ENCODE measurements at regions of chr10 and their contacts with region 1.

Region 1: DNA sequence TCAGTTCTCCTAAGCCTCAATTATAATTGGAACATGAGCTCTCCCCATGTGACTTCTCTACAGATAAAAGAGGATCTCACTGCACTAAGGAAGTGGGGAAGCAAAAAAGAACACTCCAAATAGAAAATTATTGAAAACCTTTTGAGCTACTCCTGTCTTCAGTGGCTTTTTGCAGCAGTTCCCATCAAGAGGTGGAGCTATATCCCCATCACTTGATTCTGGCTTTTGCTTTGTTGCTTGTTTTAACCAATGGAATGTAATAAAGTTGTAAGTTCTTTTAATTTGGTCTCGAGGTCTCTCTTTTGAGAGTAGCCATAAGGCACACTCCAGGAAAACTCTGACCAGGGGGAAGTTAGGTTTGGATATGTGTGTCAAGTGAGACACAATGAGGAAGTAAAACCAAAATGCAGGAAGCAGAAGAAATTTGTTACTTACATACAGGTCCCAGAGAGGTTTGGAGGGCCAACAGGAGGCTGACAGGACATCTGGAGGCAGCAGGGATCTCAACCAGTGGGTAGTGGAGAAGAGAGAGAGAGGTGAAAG is 569.4 kb downstream of the HTR7 start:
- DNase-seq: peak; percentile 68
- H3K4me3 ChIP-seq: no peak overlapping the region
- H3K27ac ChIP-seq: no peak overlapping the region
- H3K4me1 ChIP-seq: peaks cover 6% of the 10 kb centered on the region
- H3K27me3 ChIP-seq: peaks cover 0 to 4% of the 10 kb centered on the region in 2 experiments
- CTCF ChIP-seq: peak in 1 of 2 donors; percentile 24
- POLR2A ChIP-seq: no peak

Region 2: GRCh38 chr10:89738551-89739209 is 549.8 kb before region 1 on chr10:
- CTCF ChIA-PET with region 1: no interaction called
- POLR2A ChIA-PET with region 1: no interaction called
- dilution Hi-C with region 1: no loop called
- intact Hi-C with region 1: no loop called
- DNase-seq: no peak
- H3K4me3 ChIP-seq: no peak overlapping the region
- H3K27ac ChIP-seq: no peak overlapping the region
- H3K4me1 ChIP-seq: no peaks in the 10 kb centered on the region
- H3K27me3 ChIP-seq: no peaks in the 10 kb centered on the region
- CTCF ChIP-seq: no peak
- POLR2A ChIP-seq: no peak

Region 3: DNA sequence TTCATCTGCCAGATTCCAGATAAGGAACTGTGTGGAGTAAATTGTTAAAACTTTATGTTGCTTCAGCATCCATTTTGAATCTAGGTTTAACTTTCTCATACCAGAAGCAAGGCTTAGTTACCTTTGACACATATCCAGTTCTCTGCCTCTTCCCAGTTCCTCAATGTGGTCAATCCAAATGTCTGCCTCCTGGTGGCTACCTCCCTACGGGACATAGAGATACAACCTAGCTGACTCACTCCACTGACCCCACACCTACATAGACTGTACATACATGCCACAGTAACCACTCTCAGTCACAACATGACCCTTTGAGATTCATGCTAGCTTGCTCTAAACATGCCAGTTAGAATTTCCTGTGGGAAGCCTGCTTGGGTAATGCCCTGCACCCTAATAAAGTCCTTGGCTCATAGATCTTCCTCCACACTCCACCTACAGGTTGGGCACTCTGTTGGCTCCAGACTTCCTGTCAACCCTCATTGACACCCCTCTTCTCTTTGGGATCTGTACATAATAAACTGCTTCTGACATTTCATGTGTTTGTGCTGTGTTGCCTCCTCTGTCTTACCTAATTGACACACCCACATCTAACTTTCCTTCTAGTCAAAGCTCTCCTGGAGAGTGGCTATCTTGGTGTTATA is 291.3 kb after region 1 on chr10:
- CTCF ChIA-PET with region 1: interaction called, 19 read pairs
- POLR2A ChIA-PET with region 1: no interaction called
- dilution Hi-C with region 1: no loop called
- intact Hi-C with region 1: no loop called
- DNase-seq: peak; percentile 5
- H3K4me3 ChIP-seq: no peak overlapping the region
- H3K27ac ChIP-seq: no peak overlapping the region
- H3K4me1 ChIP-seq: no peaks in the 10 kb centered on the region
- H3K27me3 ChIP-seq: no peaks in the 10 kb centered on the region
- CTCF ChIP-seq: peak in 1 of 2 donors; percentile 19
- POLR2A ChIP-seq: no peak

Region 4: GRCh38 chr10:90652519-90652918 is 364.1 kb after region 1 on chr10:
- CTCF ChIA-PET with region 1: interaction called, 17 read pairs
- POLR2A ChIA-PET with region 1: no interaction called
- dilution Hi-C with region 1: no loop called
- intact Hi-C with region 1: loop called (anchors 2 kb)
- DNase-seq: peak; percentile 10
- H3K4me3 ChIP-seq: no peak overlapping the region
- H3K27ac ChIP-seq: no peak overlapping the region
- H3K4me1 ChIP-seq: no peaks in the 10 kb centered on the region
- H3K27me3 ChIP-seq: no peaks in the 10 kb centered on the region
- CTCF ChIP-seq: peak in 1 of 2 donors; percentile 19
- POLR2A ChIP-seq: no peak

Region 5: GRCh38 chr10:90787393-90788198 is 499.1 kb after region 1 on chr10:
- CTCF ChIA-PET with region 1: interaction called, 25 read pairs
- POLR2A ChIA-PET with region 1: no interaction called
- dilution Hi-C with region 1: no loop called
- intact Hi-C with region 1: no loop called
- DNase-seq: peak; percentile 47
- H3K4me3 ChIP-seq: no peak overlapping the region
- H3K27ac ChIP-seq: no peak overlapping the region
- H3K4me1 ChIP-seq: no peaks in the 10 kb centered on the region
- H3K27me3 ChIP-seq: peaks cover 9 to 25% of the 10 kb centered on the region in 2 experiments
- CTCF ChIP-seq: peak; percentile 72 to 78
- POLR2A ChIP-seq: no peak

Measured in endothelial cell of umbilical vein (primary cell).